ENCODE measurements at regions of chr17 and their contacts with region 1.

Region 1: DNA sequence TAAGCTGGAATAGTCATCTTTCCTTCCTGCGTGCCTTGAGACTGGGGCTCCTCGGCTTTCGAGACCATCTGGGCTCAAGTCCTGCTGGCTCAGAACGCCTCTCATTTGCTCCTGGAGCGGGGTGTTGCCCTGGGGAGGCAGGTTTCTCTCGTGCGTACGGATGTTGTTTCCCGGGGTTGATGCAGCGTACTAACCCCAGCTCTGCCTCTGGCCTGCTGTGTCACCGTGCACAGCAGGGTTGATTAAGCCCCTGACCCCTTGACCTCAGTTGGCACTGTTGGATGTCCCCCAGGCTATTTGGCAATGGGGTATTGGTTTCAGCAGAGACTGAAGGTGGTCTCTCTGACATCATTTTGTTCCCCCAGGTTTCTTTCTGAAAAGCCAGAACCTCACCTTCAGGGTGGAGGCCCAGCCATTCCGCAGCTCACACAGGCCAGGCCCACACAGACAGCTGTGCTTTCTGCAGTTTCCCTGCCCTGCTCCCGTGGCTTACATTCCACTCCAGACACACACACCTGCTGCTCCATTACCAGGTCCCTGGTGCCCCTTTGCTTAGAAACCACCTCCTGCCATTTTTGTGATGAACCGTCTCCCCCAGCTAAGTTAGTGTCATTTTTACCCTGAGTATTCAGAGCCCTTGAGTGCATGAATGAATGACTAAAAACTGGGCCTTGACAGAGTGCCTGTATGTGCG is 233.5 kb downstream of the CCDC182 start:
- DNase-seq: no peak
- H3K4me3 ChIP-seq: no peak overlapping the region
- H3K27ac ChIP-seq: no peak overlapping the region
- H3K4me1 ChIP-seq: no peaks in the 10 kb centered on the region
- H3K27me3 ChIP-seq: no peaks in the 10 kb centered on the region
- CTCF ChIP-seq: no peak
- POLR2A ChIP-seq: no peak

Region 2: GRCh38 chr17:57480438-57481196 is 31.0 kb before region 1 on chr17:
- intact Hi-C with region 1: loop called (anchors 1 kb)
- DNase-seq: peak in 1 of 2 donors; percentile 48
- H3K4me3 ChIP-seq: no peak overlapping the region
- H3K27ac ChIP-seq: peak overlapping the region; percentile 22 to 59
- H3K4me1 ChIP-seq: peaks cover 4 to 15% of the 10 kb centered on the region in 2 donors
- H3K27me3 ChIP-seq: no peaks in the 10 kb centered on the region
- CTCF ChIP-seq: no peak
- POLR2A ChIP-seq: no peak

Measured in breast epithelium (tissue), 4 donors.